SK-N-SH (cell line): ENCODE measurements at regions of chr9 and their contacts with region 1.

Region 1: GRCh38 chr9:35945341-35946018 is 12.5 kb downstream of the OR2S2 start:
- DNase-seq: peak; percentile 75
- H3K4me3 ChIP-seq: peak overlapping the region; percentile 24 to 28; a peak in 3 of 4 replicates
- H3K27ac ChIP-seq: peak overlapping the region in 1 of 2 experiments; percentile 40; a peak in 2 of 4 replicates
- H3K4me1 ChIP-seq: peaks cover 0 to 2% of the 10 kb centered on the region in 2 experiments; a peak in 1 of 4 replicates
- H3K27me3 ChIP-seq: no peaks in the 10 kb centered on the region
- CTCF ChIP-seq: peak; percentile 92
- EP300 ChIP-seq: no peak; a peak in 1 of 4 replicates
- RAD21 ChIP-seq: peak; percentile 73

Region 2: DNA sequence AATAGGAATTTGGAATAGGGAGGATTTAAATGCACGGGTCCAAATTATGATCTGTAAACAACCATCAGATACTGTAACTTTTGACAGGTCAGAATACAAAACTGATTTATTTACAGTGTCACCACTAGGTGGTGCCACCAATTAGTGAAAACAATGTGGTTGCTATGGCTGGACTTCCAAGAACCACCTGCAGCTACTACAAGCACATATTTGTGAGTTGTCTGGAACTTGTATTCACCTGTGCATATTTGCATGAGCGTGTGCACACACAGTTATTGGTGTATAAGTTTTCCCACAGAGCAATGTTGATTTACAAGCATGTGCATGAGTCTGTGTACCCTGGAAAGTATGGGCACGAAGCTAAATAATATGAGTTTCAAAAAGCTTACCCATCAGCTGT is 42.4 kb before region 1 on chr9:
- CTCF ChIA-PET with region 1: interaction called, 94 read pairs
- POLR2A ChIA-PET with region 1: interaction called, 5 read pairs
- DNase-seq: peak; percentile 72
- H3K4me3 ChIP-seq: peak overlapping the region in 1 of 2 experiments; percentile 3; a peak in 1 of 4 replicates
- H3K27ac ChIP-seq: no peak overlapping the region
- H3K4me1 ChIP-seq: peaks cover 30% of the 10 kb centered on the region in 2 experiments; a peak in 3 of 4 replicates
- H3K27me3 ChIP-seq: no peaks in the 10 kb centered on the region
- CTCF ChIP-seq: peak; percentile 81
- EP300 ChIP-seq: no peak
- RAD21 ChIP-seq: peak; percentile 80

Region 3: DNA sequence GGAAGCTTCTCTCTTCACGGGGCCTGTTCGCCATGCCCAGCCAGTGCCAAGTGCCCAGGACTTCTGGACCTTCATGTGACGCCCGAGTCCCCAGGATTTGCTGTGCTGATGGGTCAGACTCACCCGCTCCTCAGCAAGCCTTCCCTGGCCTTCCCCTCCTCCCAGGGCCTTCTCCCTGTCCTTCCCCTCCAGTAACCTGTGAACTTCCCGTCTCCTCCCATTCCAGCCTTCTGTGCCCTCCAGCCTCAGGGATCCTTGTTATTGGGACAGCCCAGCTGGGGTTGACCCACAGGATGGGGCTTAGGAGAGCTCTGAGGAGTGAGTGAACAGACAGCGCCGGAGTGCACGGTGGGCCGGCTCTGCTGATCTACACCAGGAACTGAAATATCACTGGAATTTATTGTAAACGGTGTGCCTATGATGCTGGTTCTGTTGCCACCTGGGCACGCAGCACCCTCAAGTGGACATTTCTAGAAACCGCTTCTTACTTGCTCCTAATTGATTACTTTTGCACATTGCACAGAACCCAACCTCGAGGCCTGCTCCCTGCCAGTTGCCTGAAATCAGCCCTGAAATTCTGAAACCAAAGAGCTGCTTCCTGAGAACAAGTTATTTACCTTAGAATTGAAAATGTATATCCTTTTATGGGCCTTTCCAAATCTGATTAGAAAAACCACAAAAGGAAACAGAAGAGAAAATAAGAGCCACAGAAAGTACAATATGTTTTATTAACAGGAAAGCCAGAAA is 34.7 kb before region 1 on chr9:
- CTCF ChIA-PET with region 1: interaction called, 94 read pairs
- POLR2A ChIA-PET with region 1: interaction called, 5 read pairs
- DNase-seq: no peak
- H3K4me3 ChIP-seq: no peak overlapping the region; a peak in 1 of 4 replicates
- H3K27ac ChIP-seq: no peak overlapping the region
- H3K4me1 ChIP-seq: peaks cover 29 to 34% of the 10 kb centered on the region in 2 experiments; a peak in 3 of 4 replicates
- H3K27me3 ChIP-seq: no peaks in the 10 kb centered on the region
- CTCF ChIP-seq: peak; percentile 60
- EP300 ChIP-seq: no peak
- RAD21 ChIP-seq: peak; percentile 58

Region 4: DNA sequence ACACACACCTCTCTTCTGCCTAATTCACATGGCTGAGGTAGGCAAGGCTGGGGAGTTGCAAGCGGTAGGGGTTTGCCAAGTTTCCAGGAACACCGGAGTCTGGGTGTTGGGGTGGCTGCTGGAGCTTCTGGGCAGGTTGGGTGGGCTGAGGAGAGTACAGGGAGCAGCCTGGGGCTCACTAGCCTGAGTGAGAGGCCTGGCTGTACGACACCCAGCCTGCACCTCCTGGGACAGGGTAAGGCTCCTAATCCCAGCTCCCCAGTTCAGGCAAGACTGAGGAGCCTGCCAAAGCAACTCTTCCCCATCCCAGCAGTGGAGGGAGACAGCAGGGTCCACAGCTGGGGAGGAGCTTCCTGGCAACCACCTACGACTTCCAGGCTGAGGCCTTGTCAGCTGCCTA is 28.2 kb before region 1 on chr9:
- CTCF ChIA-PET with region 1: interaction called, 10 read pairs
- POLR2A ChIA-PET with region 1: no interaction called
- DNase-seq: no peak
- H3K4me3 ChIP-seq: no peak overlapping the region
- H3K27ac ChIP-seq: no peak overlapping the region
- H3K4me1 ChIP-seq: peaks cover 0 to 7% of the 10 kb centered on the region in 2 experiments; a peak in 1 of 4 replicates
- H3K27me3 ChIP-seq: no peaks in the 10 kb centered on the region
- CTCF ChIP-seq: no peak
- EP300 ChIP-seq: no peak
- RAD21 ChIP-seq: no peak

Region 5: DNA sequence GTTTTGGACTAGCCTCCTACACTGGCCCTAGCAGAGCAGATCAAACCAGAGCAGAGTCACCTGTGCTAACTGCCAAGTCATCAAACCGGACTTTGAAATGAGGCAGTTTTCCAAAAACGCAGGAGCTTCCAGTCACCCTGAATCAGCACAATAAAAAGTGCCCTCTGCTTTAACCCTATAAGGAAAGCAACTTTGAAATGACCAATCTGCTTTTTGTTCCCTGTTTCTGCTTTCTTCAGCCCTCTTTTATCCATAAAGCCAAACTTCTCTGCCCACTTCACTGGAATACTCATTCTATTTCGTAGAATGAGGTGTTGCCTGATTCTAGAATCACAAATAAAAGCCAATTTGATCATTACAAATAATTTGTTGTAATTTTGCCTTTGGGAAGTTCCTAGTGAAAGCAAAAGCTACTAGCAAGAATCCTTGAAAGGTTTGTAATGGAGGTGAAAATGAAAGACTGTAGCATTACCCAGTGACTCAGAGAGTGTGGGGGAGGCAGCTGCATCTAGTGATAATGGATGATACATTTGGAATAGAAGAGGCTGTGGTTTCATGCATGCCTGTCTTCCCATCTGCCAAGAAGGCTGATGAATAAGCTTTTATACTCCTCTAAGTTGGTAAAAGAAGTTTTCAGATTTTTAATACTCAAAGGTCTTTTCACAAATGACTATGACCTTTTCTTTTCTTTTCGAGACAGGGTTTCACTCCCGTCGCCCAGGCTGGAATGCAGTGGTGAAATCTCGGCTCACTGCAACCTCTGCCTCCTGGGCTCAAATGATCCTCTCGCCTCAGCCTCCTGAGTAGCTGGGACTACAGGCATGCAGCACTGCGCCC is 21.3 kb before region 1 on chr9:
- CTCF ChIA-PET with region 1: interaction called, 22 read pairs
- POLR2A ChIA-PET with region 1: no interaction called
- DNase-seq: no peak
- H3K4me3 ChIP-seq: peak overlapping the region in 1 of 2 experiments; percentile 41; a peak in 2 of 4 replicates
- H3K27ac ChIP-seq: peak overlapping the region; percentile 81 to 97; a peak in 3 of 4 replicates
- H3K4me1 ChIP-seq: peaks cover 0 to 24% of the 10 kb centered on the region in 2 experiments; a peak in 2 of 4 replicates
- H3K27me3 ChIP-seq: no peaks in the 10 kb centered on the region
- CTCF ChIP-seq: no peak
- EP300 ChIP-seq: peak in 1 of 2 experiments; percentile 67; a peak in 1 of 4 replicates
- RAD21 ChIP-seq: no peak

Region 6: GRCh38 chr9:35960039-35960655 is 14.7 kb after region 1 on chr9:
- CTCF ChIA-PET with region 1: interaction called, 63 read pairs
- POLR2A ChIA-PET with region 1: no interaction called
- DNase-seq: no peak
- H3K4me3 ChIP-seq: no peak overlapping the region
- H3K27ac ChIP-seq: peak overlapping the region in 1 of 2 experiments; percentile 53; a peak in 2 of 4 replicates
- H3K4me1 ChIP-seq: peaks cover 0 to 14% of the 10 kb centered on the region in 2 experiments; a peak in 2 of 4 replicates
- H3K27me3 ChIP-seq: no peaks in the 10 kb centered on the region
- CTCF ChIP-seq: no peak
- EP300 ChIP-seq: no peak
- RAD21 ChIP-seq: no peak

Region 7: GRCh38 chr9:35984021-35984420 is 38.5 kb after region 1 on chr9:
- CTCF ChIA-PET with region 1: no interaction called
- POLR2A ChIA-PET with region 1: no interaction called
- DNase-seq: no peak
- H3K4me3 ChIP-seq: no peak overlapping the region
- H3K27ac ChIP-seq: no peak overlapping the region
- H3K4me1 ChIP-seq: 0 out of 4 replicates have a peak, but pooled peaks cover 0 to 3% of the 10 kb centered on the region in 2 experiments
- H3K27me3 ChIP-seq: no peaks in the 10 kb centered on the region
- CTCF ChIP-seq: no peak
- EP300 ChIP-seq: no peak
- RAD21 ChIP-seq: no peak

Region 8: DNA sequence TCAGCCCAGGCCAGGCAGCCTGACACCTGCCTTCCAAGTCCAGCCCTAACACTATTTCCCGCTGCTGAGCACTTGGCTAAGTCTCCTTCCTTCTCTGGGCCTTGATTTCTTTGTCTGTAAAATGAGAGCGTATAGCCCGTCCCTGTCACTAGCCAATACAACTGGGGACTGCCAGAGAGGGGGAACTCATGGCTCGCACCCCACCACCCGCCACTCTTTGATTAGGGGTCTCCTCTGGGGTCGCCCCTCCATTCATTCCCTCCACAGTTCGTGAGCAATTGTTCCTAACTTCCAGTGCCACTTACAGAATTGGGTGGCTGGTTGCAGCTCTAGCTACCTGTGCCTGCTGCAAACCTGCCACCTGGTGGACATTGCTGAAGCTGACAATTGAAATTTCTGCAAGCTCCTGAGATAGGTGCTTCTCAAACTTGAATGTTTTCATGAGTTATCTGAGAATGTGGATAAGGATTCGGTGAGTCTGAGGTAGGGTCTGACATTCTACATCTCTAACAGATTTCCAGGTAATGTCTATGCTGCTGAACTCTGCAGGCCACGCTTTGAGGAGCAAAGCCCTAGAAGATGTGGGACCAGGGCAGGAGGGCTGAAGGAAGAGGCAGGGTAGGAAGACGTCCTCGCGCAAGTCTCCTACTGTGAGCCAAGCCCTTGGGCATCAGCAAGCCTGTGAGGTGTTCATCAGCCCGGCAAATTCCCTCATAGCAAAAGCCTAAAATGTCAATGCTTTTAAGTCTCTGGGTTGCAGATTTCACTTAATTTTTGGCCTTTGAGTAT is 78.0 kb after region 1 on chr9:
- CTCF ChIA-PET with region 1: interaction called, 14 read pairs
- POLR2A ChIA-PET with region 1: no interaction called
- DNase-seq: peak; percentile 68
- H3K4me3 ChIP-seq: no peak overlapping the region
- H3K27ac ChIP-seq: no peak overlapping the region
- H3K4me1 ChIP-seq: peaks cover 0 to 7% of the 10 kb centered on the region in 2 experiments; a peak in 2 of 4 replicates
- H3K27me3 ChIP-seq: no peaks in the 10 kb centered on the region
- CTCF ChIP-seq: peak; percentile 93
- EP300 ChIP-seq: no peak
- RAD21 ChIP-seq: peak; percentile 88